Psoas muscle (tissue), 8 donors: ENCODE measurements at regions of chr1 and their contacts with region 1.

Region 1: DNA sequence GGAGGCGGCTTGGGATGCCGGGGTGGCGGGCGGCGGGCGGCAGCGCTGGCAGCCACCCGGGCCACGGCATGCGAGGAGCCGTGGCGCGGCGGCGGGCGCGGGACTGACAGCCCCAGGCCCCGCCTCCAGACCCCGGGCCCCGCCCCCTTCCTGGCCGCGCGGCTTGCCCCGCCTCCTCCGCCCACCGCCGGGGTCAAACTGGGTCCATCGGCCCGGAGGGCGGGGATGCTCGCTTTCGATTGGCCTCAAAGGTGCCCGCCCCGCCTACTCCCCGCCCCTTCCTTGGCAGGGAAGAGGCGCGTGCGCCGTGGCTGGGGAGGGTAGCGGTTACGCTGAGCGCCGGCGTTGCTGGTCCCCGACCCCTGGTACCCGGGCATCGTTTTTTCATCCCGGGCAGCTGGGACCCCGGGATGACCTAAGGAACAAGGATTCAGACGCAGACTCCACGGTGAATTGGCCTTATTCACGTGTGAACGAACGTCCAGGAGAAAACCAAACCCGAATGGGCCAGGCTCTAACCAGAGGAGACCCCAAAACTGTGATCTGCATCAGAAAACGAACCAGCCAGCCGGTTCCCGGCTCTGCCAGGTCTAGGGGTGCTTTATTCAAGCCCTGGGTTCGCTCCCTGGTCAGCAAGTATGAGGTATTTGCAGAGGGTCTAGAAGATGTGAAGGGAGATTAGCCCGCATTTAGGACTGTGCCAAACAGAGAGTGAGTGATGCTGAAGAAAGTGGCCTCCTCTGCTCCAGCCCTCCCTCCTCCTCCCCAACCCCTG is 117.2 kb upstream of the GUCA2B start:
- DNase-seq: peak; percentile 97 to 98
- ATAC-seq: peak; percentile 98 to 99 (median 98)
- H3K4me3 ChIP-seq: peak overlapping the region; percentile 96
- H3K27ac ChIP-seq: peak overlapping the region; percentile 76
- H3K4me1 ChIP-seq: peaks cover 8% of the 10 kb centered on the region
- H3K27me3 ChIP-seq: no peaks in the 10 kb centered on the region
- CTCF ChIP-seq: no peak

Region 2: DNA sequence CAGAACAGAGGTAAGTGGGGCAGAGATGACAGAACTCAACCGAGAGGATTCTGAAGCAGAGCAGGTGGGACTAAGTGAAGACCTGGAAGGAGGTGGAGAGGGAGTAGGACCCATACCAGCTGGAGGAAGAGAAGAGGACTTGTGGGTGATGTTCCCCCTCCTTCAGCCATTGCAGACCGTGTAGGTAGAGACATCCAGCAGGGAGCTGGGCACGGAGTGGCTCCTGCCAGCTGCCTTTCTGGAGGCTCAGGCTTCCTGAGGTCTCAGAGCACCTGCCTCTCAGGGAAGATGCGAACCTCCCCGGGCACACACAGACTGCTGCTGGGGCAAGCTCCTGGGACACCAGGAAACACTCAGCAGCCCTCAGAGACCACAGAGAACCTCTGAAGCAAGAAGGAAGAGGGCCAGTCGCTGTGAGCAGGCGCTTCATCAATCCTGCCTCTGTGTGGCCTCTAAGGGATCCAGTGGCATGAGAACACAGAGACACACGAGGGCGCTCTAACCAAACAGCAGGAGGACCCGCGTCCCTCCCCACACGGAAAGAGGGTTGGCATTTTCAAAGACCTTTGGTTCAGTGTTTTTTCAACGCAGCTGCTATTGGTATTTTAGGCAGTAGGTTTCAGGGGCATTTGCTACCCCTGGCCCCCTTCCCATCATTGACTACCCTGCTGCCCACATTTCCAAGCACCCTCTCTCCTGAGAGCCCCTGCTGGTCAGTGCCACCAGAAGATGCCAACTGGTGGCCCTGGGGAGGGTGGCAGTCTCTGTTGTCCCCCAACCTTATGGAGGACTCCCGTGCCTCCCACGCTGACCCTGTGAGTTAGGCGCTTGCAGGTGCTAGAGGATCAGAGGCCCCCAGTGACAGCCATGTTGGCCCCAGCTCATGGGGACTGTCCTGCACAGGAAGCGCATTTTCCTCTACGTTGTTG is 462.0 kb before region 1 on chr1:
- intact Hi-C with region 1: loop called in 1 of 2 experiments (anchors 5 kb)
- DNase-seq: peak; percentile 75 to 85
- ATAC-seq: peak; percentile 88 to 96 (median 90)
- H3K4me3 ChIP-seq: no peak overlapping the region
- H3K27ac ChIP-seq: no peak overlapping the region
- H3K4me1 ChIP-seq: no peaks in the 10 kb centered on the region
- H3K27me3 ChIP-seq: no peaks in the 10 kb centered on the region
- CTCF ChIP-seq: peak; percentile 89

Region 3: GRCh38 chr1:41812051-41812450 is 224.0 kb before region 1 on chr1:
- intact Hi-C with region 1: loop called in 1 of 2 experiments (anchors 5 kb)
- DNase-seq: peak in 1 of 2 donors; percentile 28
- ATAC-seq: peak in 3 of 4 donors; percentile 37 to 60 (median 37)
- H3K4me3 ChIP-seq: no peak overlapping the region
- H3K27ac ChIP-seq: no peak overlapping the region
- H3K4me1 ChIP-seq: peaks cover 30% of the 10 kb centered on the region
- H3K27me3 ChIP-seq: no peaks in the 10 kb centered on the region
- CTCF ChIP-seq: peak; percentile 55

Region 4: GRCh38 chr1:41919764-41920397 is 116.1 kb before region 1 on chr1:
- intact Hi-C with region 1: loop called in 1 of 2 experiments (anchors 5 kb)
- DNase-seq: peak; percentile 63 to 86
- ATAC-seq: peak; percentile 90 to 96 (median 94)
- H3K4me3 ChIP-seq: peak overlapping the region; percentile 80
- H3K27ac ChIP-seq: peak overlapping the region; percentile 87
- H3K4me1 ChIP-seq: peaks cover 29% of the 10 kb centered on the region
- H3K27me3 ChIP-seq: no peaks in the 10 kb centered on the region
- CTCF ChIP-seq: no peak

Region 5: GRCh38 chr1:41955461-41956159 is 80.4 kb before region 1 on chr1:
- intact Hi-C with region 1: loop called in 1 of 2 experiments (anchors 5 kb)
- DNase-seq: no peak
- ATAC-seq: no peak
- H3K4me3 ChIP-seq: no peak overlapping the region
- H3K27ac ChIP-seq: no peak overlapping the region
- H3K4me1 ChIP-seq: peaks cover 19% of the 10 kb centered on the region
- H3K27me3 ChIP-seq: no peaks in the 10 kb centered on the region
- CTCF ChIP-seq: no peak

Region 6: GRCh38 chr1:42109600-42109999 is 73.6 kb after region 1 on chr1:
- intact Hi-C with region 1: no loop called
- DNase-seq: no peak
- ATAC-seq: no peak
- H3K4me3 ChIP-seq: no peak overlapping the region
- H3K27ac ChIP-seq: no peak overlapping the region
- H3K4me1 ChIP-seq: no peaks in the 10 kb centered on the region
- H3K27me3 ChIP-seq: peaks cover 0 to 2% (median 0%) of the 10 kb centered on the region in 3 donors
- CTCF ChIP-seq: no peak